HEK293 (cell line): ENCODE measurements at regions of chr7 and their contacts with region 1.

Region 1: GRCh38 chr7:123865517-123866117 is 20.6 kb downstream of the HYAL4 start:
- H3K4me3 ChIP-seq: no peak overlapping the region
- H3K27ac ChIP-seq: no peak overlapping the region
- H3K4me1 ChIP-seq: no peaks in the 10 kb centered on the region
- CTCF ChIP-seq: no peak

Region 2: GRCh38 chr7:123635551-123636359 is 229.9 kb before region 1 on chr7:
- CTCF ChIA-PET with region 1: interaction called, 29 read pairs
- POLR2A ChIA-PET with region 1: no interaction called
- H3K4me3 ChIP-seq: no peak overlapping the region
- H3K27ac ChIP-seq: no peak overlapping the region
- H3K4me1 ChIP-seq: no peaks in the 10 kb centered on the region
- CTCF ChIP-seq: peak; percentile 13; the same call in 1 of the 2 replicates

Region 3: DNA sequence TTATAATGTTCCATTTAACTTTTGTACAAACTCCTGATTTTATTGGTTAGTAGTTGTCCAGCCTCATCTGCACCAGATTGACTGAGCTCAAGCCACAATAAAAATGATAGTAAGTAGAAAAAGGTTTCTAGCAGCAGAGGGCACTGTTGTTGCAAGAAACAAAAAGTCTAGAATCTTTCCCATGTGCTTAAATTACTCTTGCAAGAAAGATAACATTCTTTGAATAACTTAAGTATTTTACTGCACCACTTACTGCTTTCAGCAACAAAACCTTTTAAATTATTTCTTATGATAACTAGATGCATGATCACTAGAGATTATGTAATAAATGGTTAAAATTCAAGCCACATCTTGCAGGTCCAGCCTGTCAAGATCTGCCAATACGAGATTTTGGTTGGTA is 182.9 kb before region 1 on chr7:
- CTCF ChIA-PET with region 1: interaction called, 20 read pairs
- POLR2A ChIA-PET with region 1: no interaction called
- H3K4me3 ChIP-seq: no peak overlapping the region
- H3K27ac ChIP-seq: no peak overlapping the region
- H3K4me1 ChIP-seq: no peaks in the 10 kb centered on the region
- CTCF ChIP-seq: no peak

Region 4: GRCh38 chr7:123797673-123798527 is 67.7 kb before region 1 on chr7:
- CTCF ChIA-PET with region 1: interaction called, 74 read pairs
- POLR2A ChIA-PET with region 1: no interaction called
- H3K4me3 ChIP-seq: no peak overlapping the region
- H3K27ac ChIP-seq: peak overlapping the region; percentile 19; the same call in 1 of the 2 replicates
- H3K4me1 ChIP-seq: peaks cover 13% of the 10 kb centered on the region; the same call in 1 of the 2 replicates
- CTCF ChIP-seq: no peak

Region 5: GRCh38 chr7:123849855-123850254 is 15.8 kb before region 1 on chr7:
- CTCF ChIA-PET with region 1: interaction called, 11 read pairs
- POLR2A ChIA-PET with region 1: no interaction called
- H3K4me3 ChIP-seq: no peak overlapping the region
- H3K27ac ChIP-seq: no peak overlapping the region
- H3K4me1 ChIP-seq: no peaks in the 10 kb centered on the region
- CTCF ChIP-seq: no peak

Region 6: DNA sequence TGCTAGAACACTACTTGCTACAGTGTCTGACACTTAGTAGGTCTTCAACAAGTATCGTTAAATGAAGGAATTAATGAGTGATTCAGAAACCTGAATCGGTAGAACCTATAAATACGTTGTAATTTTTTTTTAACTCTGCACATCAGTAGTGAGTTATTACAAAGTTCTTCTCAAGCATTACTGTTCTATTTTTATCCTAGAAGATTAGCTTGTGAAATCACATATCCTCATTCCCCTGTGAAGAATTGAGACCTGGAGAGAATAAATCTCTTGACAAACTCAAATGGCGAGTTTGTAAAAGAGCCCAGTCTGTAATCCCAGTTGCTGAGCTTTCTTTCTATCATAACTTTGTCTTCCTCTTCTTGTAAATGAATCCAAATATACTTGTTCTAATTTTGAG is 14.0 kb after region 1 on chr7:
- CTCF ChIA-PET with region 1: interaction called, 20 read pairs
- POLR2A ChIA-PET with region 1: no interaction called
- H3K4me3 ChIP-seq: no peak overlapping the region
- H3K27ac ChIP-seq: no peak overlapping the region
- H3K4me1 ChIP-seq: no peaks in the 10 kb centered on the region
- CTCF ChIP-seq: no peak

Region 7: DNA sequence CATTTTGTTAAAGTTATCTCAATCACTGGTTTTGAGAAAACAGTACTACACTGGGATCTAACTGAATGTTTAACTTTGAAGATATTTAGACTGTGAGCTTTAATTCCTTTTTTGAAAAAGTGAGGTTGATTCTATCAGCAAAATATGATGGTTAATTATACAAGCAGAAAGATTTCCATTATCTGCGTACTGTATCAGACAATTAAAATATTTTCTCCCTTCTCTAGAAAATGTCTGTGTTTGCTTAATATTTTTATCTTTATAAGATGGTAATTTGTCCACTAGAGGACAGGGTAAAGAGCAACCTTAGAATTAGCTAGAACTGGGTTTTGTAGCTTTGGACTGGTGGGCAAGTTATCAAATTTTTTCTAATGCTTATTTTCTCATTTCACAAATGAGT is 54.0 kb after region 1 on chr7:
- CTCF ChIA-PET with region 1: no interaction called
- POLR2A ChIA-PET with region 1: no interaction called
- H3K4me3 ChIP-seq: no peak overlapping the region
- H3K27ac ChIP-seq: no peak overlapping the region
- H3K4me1 ChIP-seq: no peaks in the 10 kb centered on the region
- CTCF ChIP-seq: no peak